ENCODE measurements at regions of chrX and their contacts with region 1.

Region 1: DNA sequence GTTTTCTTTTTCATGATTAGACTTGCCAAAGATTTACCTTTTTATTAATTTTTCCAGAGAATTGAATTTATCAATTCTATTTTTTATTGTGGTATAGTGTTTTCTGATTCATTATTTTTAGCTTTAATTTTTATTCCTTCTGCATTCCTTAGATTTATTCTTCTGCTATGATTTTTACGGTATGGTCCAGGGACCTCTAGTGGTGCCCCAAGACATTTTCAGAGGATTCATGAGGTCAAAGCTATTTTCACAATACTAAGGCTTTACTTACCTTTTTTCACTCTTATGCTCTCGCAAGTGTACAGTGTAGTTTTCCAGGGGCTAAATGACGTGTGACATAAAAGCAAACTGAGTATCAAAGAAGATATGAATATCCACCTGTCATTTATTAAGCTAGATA is 8.0 kb downstream of the RADX start:
- DNase-seq: no peak
- ATAC-seq: no peak
- H3K4me3 Mint-ChIP-seq: no peak overlapping the region
- H3K27ac Mint-ChIP-seq: no peak overlapping the region
- H3K4me1 Mint-ChIP-seq: no peaks in the 10 kb centered on the region
- H3K27me3 Mint-ChIP-seq: no peaks in the 10 kb centered on the region

Region 2: DNA sequence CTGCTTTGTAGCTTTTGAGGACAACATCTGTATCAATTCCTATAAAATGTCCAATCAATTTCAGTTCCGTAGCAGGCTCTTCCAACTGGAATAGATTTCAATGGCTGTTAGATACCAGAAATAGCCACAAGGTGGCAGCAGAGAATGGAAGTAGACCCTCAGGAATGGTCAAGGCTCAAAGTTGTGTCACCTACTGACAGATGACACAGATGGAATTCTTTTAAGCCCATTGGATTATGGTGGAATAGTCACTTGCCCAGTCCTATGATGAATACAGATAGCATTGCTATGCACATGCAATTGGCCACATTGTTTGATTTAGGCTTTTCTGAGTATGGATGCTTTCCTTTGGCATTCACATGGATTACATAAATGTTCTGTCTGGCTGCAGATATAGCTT is 138.5 kb before region 1 on chrX:
- CTCF ChIA-PET with region 1: interaction called, 18 read pairs
- POLR2A ChIA-PET with region 1: no interaction called
- DNase-seq: peak; percentile 36
- ATAC-seq: no peak
- H3K4me3 Mint-ChIP-seq: no peak overlapping the region
- H3K27ac Mint-ChIP-seq: no peak overlapping the region
- H3K4me1 Mint-ChIP-seq: peaks cover 11% of the 10 kb centered on the region
- H3K27me3 Mint-ChIP-seq: no peaks in the 10 kb centered on the region